HepG2 (cell line): ENCODE measurements at regions of chr18 and their contacts with region 1.

Region 1: DNA sequence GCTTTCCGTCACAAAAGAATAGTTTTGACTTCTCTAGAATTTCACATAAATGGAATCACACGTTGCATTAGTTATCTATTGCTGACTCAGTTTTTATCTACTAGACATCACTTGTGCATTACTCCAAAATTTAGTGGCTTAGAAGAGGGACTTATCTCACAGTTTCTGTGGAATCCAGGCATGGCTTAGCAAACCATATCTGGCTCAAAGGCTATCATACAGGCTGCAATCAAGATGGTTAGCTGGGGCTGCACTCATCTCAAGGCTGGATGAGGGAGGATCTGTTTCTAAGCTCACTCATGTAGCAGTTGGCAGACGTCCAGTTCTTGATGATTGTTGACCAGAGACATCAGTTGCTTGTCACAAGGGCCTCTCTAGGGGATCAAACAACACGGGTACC is 6.6 kb upstream of the DSC3 start:
- DNase-seq: no peak
- ATAC-seq: no peak
- H3K4me3 ChIP-seq: no peak overlapping the region
- H3K27ac ChIP-seq: no peak overlapping the region
- H3K4me1 ChIP-seq: peaks cover 8% of the 10 kb centered on the region
- H3K27me3 ChIP-seq: peaks cover 0 to 1% of the 10 kb centered on the region in 2 experiments; a peak in 3 of 5 replicates
- CTCF ChIP-seq: no peak
- EP300 ChIP-seq: no peak
- POLR2A ChIP-seq: no peak
- RAD21 ChIP-seq: no peak

Region 2: GRCh38 chr18:31010601-31011000 is 38.6 kb before region 1 on chr18:
- CTCF ChIA-PET with region 1: no interaction called
- POLR2A ChIA-PET with region 1: no interaction called
- in situ Hi-C with region 1: no loop called
- intact Hi-C with region 1: loop called (anchors 2 kb)
- DNase-seq: no peak
- ATAC-seq: no peak
- H3K4me3 ChIP-seq: no peak overlapping the region
- H3K27ac ChIP-seq: no peak overlapping the region
- H3K4me1 ChIP-seq: no peaks in the 10 kb centered on the region
- H3K27me3 ChIP-seq: no peaks in the 10 kb centered on the region
- CTCF ChIP-seq: no peak
- EP300 ChIP-seq: no peak
- POLR2A ChIP-seq: no peak
- RAD21 ChIP-seq: no peak

Region 3: GRCh38 chr18:32010124-32010738 is 961.0 kb after region 1 on chr18:
- CTCF ChIA-PET with region 1: no interaction called
- POLR2A ChIA-PET with region 1: no interaction called
- in situ Hi-C with region 1: no loop called
- intact Hi-C with region 1: no loop called
- DNase-seq: no peak
- ATAC-seq: no peak
- H3K4me3 ChIP-seq: no peak overlapping the region
- H3K27ac ChIP-seq: no peak overlapping the region
- H3K4me1 ChIP-seq: no peaks in the 10 kb centered on the region
- H3K27me3 ChIP-seq: peaks cover 0 to 6% of the 10 kb centered on the region in 2 experiments; a peak in 1 of 5 replicates
- CTCF ChIP-seq: no peak
- EP300 ChIP-seq: no peak
- POLR2A ChIP-seq: no peak
- RAD21 ChIP-seq: no peak